Spleen (tissue), 13 donors: ENCODE measurements at regions of chr9 and their contacts with region 1.

Region 1: DNA sequence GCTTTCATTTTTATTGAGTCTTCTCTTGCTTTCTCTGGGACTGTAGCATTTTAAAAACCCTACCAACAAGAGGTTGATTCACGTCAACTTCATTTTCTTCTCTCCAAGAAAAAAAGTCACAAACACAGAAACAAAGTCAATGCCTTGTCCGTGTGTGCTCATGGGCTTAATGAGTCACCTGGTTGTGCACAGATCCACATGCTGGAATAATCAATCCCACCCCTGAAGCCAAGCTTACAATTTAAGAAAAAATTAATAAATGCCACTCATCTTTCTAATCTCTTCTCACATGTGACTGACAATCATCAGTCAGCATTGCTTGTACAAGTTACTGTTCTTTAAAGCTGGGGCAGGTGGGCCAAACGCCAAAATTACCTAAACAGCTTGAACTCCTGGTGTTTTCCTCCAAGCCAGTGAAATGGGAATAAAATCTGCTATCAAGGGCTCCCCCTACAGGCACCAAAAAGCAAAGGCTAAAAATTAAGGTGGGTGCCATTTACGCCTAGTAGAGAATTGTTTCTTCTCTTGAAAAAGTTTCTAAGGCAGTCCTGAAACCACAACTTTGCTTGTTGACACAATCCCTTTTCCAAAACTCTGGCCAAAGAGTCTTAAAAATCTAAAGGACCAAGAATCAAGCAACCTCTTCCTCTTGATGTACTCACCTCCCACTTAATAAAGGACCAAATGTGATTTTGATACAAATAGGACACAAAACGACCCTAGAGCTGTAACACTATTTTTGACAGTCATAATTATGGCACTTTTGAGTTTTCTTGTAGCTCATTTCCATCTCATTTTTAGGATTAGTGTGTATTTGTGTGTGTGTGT is 21.3 kb downstream of the TRMO start:
- DNase-seq: no peak
- H3K4me3 ChIP-seq: no peak overlapping the region
- H3K27ac ChIP-seq: peak overlapping the region in 1 of 8 donors; percentile 96
- H3K4me1 ChIP-seq: peaks cover 4 to 60% (median 25%) of the 10 kb centered on the region in 6 donors
- H3K27me3 ChIP-seq: no peaks in the 10 kb centered on the region
- CTCF ChIP-seq: peak; percentile 18 to 81 (median 70)
- POLR2A ChIP-seq: no peak

Region 2: DNA sequence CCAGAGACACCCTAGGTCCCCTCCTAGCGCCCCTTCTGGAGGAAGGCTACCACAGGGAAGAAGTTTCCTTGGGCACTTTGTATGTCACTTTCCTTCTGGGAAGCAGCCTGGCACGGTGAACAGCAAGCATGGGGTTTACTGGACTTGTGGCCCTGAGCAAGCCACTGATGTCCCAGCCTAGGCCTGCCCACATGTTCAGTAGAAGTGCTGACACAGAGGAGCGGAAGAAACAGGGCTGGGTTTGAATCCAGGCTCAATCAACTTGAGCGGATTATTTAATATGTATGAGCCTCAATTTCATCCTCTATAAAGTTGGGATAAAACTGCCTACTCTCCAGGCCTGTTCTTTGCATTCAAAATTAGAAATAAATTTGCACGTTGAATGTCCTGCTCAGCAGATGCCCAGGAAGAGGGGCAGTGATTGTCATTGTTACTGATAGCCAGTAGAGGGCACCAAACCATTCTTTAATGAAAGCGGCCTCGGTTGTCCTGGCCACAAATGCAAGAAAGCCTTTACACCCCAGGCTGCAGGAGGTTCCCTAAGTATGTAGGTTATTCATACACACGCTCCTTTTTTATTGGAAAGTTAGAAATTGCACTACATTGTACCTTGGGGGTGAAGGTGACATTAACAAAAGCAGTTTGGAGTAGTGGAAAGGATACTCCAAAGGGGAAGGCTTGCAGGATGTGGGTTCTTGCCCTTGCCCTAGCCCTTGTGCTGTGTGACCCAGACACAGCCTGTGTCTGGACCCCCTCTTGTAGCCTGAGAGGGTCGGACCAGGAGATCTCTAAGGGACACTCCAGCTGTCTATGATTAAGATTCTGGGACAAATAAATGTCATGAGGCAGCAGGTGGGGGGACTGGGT is 190.4 kb before region 1 on chr9:
- intact Hi-C with region 1: loop called (anchors 2 kb)
- DNase-seq: no peak
- H3K4me3 ChIP-seq: no peak overlapping the region
- H3K27ac ChIP-seq: no peak overlapping the region
- H3K4me1 ChIP-seq: peaks cover 0 to 11% (median 6%) of the 10 kb centered on the region in 6 donors
- H3K27me3 ChIP-seq: peaks cover 0 to 44% (median 6%) of the 10 kb centered on the region in 7 donors
- CTCF ChIP-seq: peak; percentile 55 to 94 (median 84)
- POLR2A ChIP-seq: no peak